ENCODE measurements at regions of chr1 and their contacts with region 1.

Region 1: DNA sequence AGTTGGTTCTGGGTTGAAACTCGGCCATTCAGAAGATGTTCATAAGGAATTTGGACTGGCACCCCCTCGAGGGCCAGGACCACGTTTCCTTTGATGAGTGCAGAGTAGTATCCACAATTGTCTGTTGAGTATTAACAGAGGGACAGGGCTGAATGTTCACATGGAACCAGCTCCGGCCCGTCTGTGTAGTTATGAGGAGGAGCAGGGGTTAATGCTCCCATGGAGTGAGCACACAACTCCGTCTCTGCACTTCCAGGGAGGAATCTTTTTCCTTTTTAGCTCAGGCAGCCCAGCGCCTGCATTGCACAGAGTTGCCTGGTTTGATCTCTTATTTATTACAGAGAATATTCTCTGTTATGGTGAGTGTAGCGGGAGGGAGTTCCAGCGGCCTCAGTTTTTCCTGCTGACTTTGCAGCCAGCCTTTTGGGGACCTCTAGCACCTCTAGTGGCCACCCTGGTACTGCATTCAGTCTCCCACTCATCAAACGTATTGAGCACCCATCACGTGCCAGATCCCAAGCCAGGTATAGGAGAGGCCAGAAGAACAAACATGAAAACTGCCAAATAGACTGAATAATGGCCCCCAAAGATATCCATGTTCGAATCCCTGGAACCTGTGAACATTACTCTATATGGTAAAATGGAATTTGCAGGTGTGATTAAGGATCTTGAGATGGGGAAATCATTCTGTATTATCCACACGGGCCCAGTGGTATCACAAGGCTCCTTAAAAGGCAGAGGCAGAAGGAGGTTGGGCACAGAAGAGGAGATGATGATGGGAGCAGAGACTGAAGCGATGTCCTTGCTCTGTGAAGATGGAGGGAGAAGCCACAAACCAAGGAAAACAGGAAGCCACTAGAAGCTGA is 167.7 kb upstream of the CSF3R start:
- DNase-seq: peak; percentile 38 to 94 (median 78)

Region 2: GRCh38 chr1:36576118-36576517 is 74.3 kb before region 1 on chr1:
- intact Hi-C with region 1: loop called (anchors 2 kb)
- DNase-seq: peak; percentile 18 to 94 (median 70)

Region 3: DNA sequence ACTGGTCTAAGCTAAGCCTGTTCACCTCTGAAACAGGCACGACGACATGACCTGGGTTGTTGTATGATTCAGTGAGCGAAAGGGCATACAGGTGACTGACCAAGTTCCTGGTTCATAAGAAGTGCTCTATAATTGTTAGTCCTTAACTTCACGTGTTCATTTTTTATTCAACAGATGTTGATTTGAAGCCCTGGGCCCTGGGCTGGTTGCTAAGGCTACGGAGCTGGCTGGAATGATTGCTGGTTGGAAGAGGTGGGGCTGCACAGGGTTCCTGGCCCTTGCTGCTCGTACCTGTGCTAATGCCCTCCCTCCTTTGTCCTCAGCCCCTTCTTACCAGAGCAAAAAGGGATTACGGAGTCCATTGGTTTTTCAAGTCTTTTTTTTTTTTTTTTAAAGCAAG is 56.4 kb before region 1 on chr1:
- intact Hi-C with region 1: no loop called
- DNase-seq: peak in 2 of 10 donors; percentile 1 to 15

Region 4: DNA sequence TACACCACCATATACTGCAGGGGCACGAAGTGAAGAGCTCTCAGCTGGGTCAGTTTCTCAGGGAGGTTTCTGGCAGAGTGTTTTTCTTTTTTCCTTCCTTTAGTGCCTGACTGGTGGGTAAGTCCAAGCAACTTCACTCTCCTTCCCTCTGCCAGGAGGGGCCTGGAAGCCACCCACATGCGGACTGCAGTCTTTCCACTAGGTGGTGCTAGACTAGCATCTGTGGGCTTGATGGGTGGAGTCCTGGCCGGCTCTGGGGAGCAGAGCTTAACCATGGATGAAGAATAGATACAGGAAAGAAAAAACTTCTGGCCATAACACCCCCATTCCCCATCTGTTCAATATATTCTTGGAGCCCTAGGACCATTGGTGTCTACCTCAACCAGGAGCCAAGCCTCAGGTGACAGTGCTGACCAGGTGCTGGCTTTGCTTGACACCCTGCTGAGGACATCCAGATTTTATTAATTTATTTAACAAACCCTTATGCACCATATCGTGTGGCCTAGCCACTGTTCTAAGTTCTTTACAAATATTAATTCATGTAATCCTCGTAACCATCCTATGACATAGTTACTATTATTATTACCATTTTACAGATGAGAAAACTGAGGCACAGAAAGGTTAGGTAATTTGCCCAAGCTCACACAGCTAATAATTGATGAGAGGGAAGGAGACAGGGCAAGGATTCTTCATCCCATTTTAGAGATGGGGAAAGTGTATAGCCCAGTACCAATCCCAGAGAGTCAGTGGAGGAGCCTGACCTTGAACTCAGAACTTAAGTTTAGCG is 41.0 kb before region 1 on chr1:
- intact Hi-C with region 1: loop called (anchors 2 kb)
- DNase-seq: peak; percentile 47 to 96 (median 78)

Region 5: DNA sequence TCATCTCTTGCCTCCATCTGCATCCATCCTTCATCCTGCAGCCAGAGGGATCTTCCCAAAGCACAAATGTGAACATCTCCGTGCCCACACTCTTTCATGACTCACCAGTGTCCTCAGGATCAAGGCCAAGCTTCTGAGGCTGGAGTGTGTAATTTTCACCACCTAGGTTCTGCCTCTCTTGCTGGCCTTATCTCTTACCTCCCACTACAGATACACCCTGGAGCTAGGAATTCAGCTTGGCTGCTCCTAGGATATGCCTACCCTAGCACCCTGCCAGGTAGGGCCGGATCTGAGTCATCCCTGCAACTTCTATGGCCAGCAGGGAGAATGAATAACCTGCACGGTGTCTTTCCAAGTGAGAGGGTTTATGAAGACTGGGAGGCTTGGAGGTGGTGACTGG is 40.9 kb after region 1 on chr1:
- intact Hi-C with region 1: loop called (anchors 5 kb)
- DNase-seq: peak in 1 of 10 donors; percentile 17

Region 6: DNA sequence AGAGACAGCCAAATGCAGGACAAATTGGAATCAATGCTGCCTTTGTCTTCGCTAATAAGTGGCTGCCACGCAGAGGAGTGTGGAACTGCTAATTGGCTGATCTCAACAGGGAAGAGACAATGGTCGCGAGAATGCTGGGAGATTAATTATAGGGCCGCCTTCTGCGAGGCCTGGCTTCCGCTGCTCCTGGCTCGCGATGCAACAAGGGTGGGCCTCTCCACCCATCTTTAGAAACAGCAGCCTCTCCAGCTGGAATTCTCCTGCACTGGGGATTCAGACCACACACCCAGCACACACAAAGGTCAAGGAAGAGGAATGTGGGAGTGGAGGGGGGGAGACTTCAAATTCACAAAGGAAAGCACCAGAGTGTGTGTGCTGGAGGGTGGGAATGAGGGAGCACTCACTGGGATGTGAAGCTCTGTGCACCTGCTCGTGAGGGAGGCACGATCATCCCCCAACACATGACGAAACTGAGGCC is 584.5 kb after region 1 on chr1:
- intact Hi-C with region 1: no loop called
- DNase-seq: peak in 6 of 10 donors; percentile 26 to 87 (median 72)

Measured in posterior cingulate gyrus (tissue), 11 donors.